Caco-2 (cell line): ENCODE measurements at regions of chr2 and their contacts with region 1.

Region 1: DNA sequence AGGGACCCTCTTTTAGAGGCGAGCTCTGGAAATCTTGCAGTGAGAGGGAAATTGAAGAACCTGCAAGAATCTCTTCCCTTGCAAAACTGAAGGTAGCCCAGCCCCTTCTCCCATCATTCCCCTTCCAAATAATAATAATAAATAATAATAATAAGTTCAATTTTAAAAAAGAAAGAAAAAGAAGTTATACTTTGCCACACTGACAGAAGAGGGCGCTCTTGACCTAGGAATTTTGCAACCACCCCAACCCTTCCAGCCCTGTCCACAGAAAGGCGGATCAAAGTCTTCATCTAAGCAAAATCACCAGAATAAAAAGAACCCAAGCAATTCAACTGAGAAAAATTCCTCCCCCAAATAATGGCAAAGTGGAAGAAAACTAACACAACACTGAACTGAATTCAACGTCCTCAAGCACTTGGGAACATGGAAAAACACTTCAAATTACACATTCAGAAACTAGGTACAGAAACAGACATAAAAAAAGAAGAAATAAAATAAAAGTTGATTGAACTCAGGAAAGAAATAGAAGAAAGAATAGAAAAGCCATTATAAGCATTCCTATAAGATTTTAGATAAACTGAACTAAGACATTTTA is 98.9 kb upstream of the GLS start:
- DNase-seq: peak; percentile 63 to 75
- H3K4me3 ChIP-seq: no peak overlapping the region
- H3K4me3 Mint-ChIP-seq: no peak overlapping the region
- H3K27ac Mint-ChIP-seq: peak overlapping the region; percentile 58
- H3K4me1 ChIP-seq: peaks cover 17% of the 10 kb centered on the region
- H3K4me1 Mint-ChIP-seq: peaks cover 40% of the 10 kb centered on the region
- H3K27me3 ChIP-seq: no peaks in the 10 kb centered on the region
- H3K27me3 Mint-ChIP-seq: no peaks in the 10 kb centered on the region
- CTCF ChIP-seq: peak; percentile 60 to 87

Region 2: DNA sequence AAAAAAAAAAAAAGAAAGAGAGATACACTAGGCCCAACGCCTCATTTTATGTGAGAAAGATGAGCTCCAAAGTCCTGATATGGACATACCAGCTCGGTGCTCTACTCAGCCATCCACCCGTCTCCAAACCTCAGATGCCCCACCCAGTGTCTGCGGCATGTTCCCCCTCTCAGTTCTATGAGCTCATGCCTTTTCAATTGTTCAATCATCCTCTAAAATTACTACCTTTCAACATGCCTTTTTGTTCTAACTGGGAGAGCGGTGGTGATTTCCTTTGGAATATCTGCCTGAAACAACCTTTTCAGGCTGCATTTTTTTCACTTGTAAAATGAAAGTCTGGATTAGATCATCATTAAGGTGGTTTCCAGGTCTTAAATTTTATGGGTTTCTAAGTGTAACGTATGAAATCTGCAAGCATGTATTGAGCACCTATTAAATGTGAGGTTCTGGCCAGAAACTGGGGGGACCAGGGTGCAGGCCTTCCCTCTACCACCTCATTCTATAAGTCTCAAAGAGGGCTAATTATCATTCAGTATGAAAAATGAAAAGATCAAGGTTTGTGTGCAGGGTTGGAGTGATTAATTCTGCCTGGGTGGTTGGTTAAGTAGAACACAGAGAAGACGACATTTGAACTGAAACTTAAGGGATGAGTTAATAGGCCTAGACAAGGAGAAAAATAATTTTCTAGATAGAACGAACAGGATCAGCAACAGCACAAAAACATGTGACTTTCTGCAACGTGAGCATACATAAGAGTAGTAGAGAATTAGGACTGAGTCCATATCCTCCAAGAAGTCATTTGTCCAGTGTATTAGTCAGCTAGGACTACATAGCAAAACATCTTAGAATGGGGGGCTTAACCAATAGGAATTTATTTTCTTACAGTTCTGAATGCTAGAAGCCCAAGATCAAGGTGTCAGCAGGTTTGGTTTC is 11.5 kb after region 1 on chr2:
- CTCF ChIA-PET with region 1: no interaction called
- POLR2A ChIA-PET with region 1: no interaction called
- intact Hi-C with region 1: no loop called
- DNase-seq: no peak
- H3K4me3 ChIP-seq: no peak overlapping the region
- H3K4me3 Mint-ChIP-seq: no peak overlapping the region
- H3K27ac Mint-ChIP-seq: peak overlapping the region; percentile 47
- H3K4me1 ChIP-seq: peaks cover 24% of the 10 kb centered on the region
- H3K4me1 Mint-ChIP-seq: peaks cover 27% of the 10 kb centered on the region
- H3K27me3 ChIP-seq: no peaks in the 10 kb centered on the region
- H3K27me3 Mint-ChIP-seq: no peaks in the 10 kb centered on the region
- CTCF ChIP-seq: no peak

Region 3: DNA sequence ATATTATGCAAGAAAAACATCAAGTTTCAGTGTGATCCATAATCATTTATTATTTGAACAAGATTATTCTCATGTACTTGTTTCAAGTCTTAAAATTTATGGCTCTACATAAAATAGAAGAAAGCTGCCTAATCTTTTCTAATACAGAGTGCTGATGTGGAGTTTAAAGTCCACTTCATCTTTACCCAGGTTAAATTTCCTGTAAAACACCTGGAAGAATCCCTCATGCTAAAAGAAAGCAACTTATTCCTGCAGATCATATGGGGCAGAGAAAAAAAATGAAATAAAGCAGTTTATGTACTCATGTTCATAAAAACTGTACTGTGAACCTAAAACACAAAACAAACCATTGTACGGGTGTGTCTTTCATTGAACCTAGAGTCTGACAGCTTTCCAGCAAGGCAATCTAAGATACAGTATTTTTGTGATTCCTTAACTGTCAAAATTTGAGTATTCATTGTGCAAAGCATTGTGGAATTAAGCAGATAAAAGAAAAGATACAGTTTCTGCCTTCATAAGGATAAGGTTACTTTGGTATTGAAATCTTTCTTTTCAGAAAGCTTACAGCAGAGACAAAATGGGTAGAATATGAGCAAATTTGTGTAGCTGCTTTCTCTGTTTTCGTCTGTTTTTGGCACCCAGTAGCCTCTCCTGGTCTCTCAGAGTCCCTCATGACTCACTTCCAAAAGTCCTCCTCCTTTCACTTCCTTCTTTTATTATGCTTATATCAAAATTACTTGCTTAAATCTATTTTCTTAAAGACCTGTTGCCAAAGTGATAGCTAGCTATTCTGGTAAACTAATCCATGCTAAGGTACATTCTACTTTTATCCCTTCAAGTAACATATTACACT is 72.1 kb after region 1 on chr2:
- CTCF ChIA-PET with region 1: no interaction called
- POLR2A ChIA-PET with region 1: no interaction called
- intact Hi-C with region 1: loop called (anchors 2 kb)
- DNase-seq: no peak
- H3K4me3 ChIP-seq: no peak overlapping the region
- H3K4me3 Mint-ChIP-seq: no peak overlapping the region
- H3K27ac Mint-ChIP-seq: no peak overlapping the region
- H3K4me1 ChIP-seq: peaks cover 37% of the 10 kb centered on the region
- H3K4me1 Mint-ChIP-seq: peaks cover 34% of the 10 kb centered on the region
- H3K27me3 ChIP-seq: no peaks in the 10 kb centered on the region
- H3K27me3 Mint-ChIP-seq: no peaks in the 10 kb centered on the region
- CTCF ChIP-seq: no peak

Region 4: DNA sequence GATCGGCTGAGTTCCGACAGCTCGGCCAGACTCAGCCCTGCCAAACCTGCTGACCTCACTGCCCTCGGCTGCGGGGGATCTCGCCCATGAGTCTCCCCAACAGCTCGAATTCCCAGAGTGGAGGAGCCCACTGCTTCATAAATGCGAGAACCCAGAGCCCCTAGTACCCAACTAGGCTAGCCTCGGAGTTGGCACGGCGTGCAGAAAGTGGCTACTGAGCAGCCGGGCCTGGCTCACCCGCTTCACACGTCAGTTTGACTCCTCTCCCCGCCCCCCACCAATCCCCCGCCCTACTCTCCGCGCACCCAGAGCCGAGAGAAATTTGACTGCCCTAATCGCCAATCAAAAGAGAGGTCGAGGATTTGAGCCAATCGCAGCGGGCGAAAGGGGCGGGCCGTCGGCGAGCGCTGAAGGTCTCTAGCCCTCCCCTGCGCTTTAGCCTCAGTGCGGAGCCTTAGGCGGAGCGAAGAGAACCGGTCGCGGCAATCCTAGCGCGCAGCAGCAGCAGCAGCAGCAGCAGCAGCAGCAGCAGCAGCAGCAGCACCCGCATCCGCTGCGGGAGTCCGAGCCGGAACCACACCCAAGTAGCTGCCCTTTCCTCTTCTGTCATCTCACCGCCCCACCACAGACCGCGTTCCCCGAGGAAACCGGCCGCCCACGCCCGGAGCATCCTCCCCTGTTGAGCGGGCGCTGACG is 98.8 kb after region 1 on chr2 and contains the start of gene GLS:
- CTCF ChIA-PET with region 1: no interaction called
- POLR2A ChIA-PET with region 1: no interaction called
- intact Hi-C with region 1: loop called (anchors 1 kb)
- DNase-seq: peak; percentile 97
- H3K4me3 ChIP-seq: peak within 1 kb of the TSS; percentile 98
- H3K4me3 Mint-ChIP-seq: peak within 1 kb of the TSS; percentile 97
- H3K27ac Mint-ChIP-seq: peak within 1 kb of the TSS; percentile 94
- H3K4me1 ChIP-seq: peaks cover 12% of the 10 kb centered on the region
- H3K4me1 Mint-ChIP-seq: peaks cover 19% of the 10 kb centered on the region
- H3K27me3 ChIP-seq: no peaks in the 10 kb centered on the region
- H3K27me3 Mint-ChIP-seq: no peaks in the 10 kb centered on the region
- CTCF ChIP-seq: no peak
- total RNA-seq, gene GLS: 107 and 136 TPM in 2 replicates

Region 5: DNA sequence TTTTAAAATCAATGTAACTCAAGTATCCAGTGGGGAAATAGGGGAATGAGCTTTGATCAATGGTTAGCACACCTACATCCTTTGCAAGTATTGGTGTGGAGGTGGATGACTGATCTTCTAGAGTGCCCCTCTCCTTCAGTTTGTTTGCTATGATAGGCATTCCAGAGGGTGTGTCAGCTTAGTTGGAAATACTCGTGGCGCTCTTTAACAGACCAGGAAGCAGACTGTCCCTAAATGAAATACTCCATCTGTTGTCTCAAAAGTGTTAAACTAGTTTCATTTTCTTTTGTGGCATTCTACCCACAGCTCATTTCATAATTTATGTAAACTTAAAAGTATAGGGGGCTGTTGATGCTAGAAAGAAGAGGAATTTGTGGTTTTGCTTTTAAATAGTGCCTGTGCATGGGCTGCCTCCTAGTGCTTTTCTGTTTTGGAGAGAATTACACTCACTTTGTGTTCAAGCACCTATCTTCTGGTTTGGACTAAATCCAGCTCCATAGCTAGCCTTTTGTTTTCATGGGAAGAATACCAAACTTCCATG is 166.1 kb after region 1 on chr2:
- CTCF ChIA-PET with region 1: interaction called, 3 read pairs
- POLR2A ChIA-PET with region 1: no interaction called
- intact Hi-C with region 1: loop called (anchors 2 kb)
- DNase-seq: peak; percentile 60 to 67
- H3K4me3 ChIP-seq: no peak overlapping the region
- H3K4me3 Mint-ChIP-seq: peak overlapping the region; percentile 15
- H3K27ac Mint-ChIP-seq: no peak overlapping the region
- H3K4me1 ChIP-seq: peaks cover 33% of the 10 kb centered on the region
- H3K4me1 Mint-ChIP-seq: peaks cover 7% of the 10 kb centered on the region
- H3K27me3 ChIP-seq: no peaks in the 10 kb centered on the region
- H3K27me3 Mint-ChIP-seq: no peaks in the 10 kb centered on the region
- CTCF ChIP-seq: no peak

Region 6: GRCh38 chr2:190996338-190996946 is 214.7 kb after region 1 on chr2:
- CTCF ChIA-PET with region 1: no interaction called
- POLR2A ChIA-PET with region 1: no interaction called
- intact Hi-C with region 1: loop called (anchors 1 kb)
- DNase-seq: peak; percentile 60 to 69
- H3K4me3 ChIP-seq: no peak overlapping the region
- H3K4me3 Mint-ChIP-seq: no peak overlapping the region
- H3K27ac Mint-ChIP-seq: no peak overlapping the region
- H3K4me1 ChIP-seq: peaks cover 7% of the 10 kb centered on the region
- H3K4me1 Mint-ChIP-seq: peaks cover 11% of the 10 kb centered on the region
- H3K27me3 ChIP-seq: no peaks in the 10 kb centered on the region
- H3K27me3 Mint-ChIP-seq: no peaks in the 10 kb centered on the region
- CTCF ChIP-seq: peak; percentile 83 to 96

Region 7: GRCh38 chr2:191030521-191031154 is 248.9 kb after region 1 on chr2:
- CTCF ChIA-PET with region 1: no interaction called
- POLR2A ChIA-PET with region 1: no interaction called
- intact Hi-C with region 1: loop called (anchors 1 kb)
- DNase-seq: peak; percentile 56 to 64
- H3K4me3 ChIP-seq: no peak overlapping the region
- H3K4me3 Mint-ChIP-seq: peak overlapping the region; percentile 43
- H3K27ac Mint-ChIP-seq: peak overlapping the region; percentile 34
- H3K4me1 ChIP-seq: peaks cover 43% of the 10 kb centered on the region
- H3K4me1 Mint-ChIP-seq: peaks cover 45% of the 10 kb centered on the region
- H3K27me3 ChIP-seq: no peaks in the 10 kb centered on the region
- H3K27me3 Mint-ChIP-seq: no peaks in the 10 kb centered on the region
- CTCF ChIP-seq: peak; percentile 63 to 75

Region 8: GRCh38 chr2:191150600-191151330 is 369.1 kb after region 1 on chr2 and contains the start of gene STAT4:
- CTCF ChIA-PET with region 1: no interaction called
- POLR2A ChIA-PET with region 1: no interaction called
- intact Hi-C with region 1: loop called (anchors 2 kb)
- DNase-seq: peak in 1 of 2 experiments; percentile 24
- H3K4me3 ChIP-seq: peak within 1 kb of the TSS; percentile 25
- H3K4me3 Mint-ChIP-seq: peak within 1 kb of the TSS; percentile 70
- H3K27ac Mint-ChIP-seq: no peak within 1 kb of the TSS
- H3K4me1 ChIP-seq: no peaks in the 10 kb centered on the region
- H3K4me1 Mint-ChIP-seq: peaks cover 5% of the 10 kb centered on the region
- H3K27me3 ChIP-seq: no peaks in the 10 kb centered on the region
- H3K27me3 Mint-ChIP-seq: peaks cover 7% of the 10 kb centered on the region
- CTCF ChIP-seq: no peak
- total RNA-seq, gene STAT4: 0.19 and 0.48 TPM in 2 replicates